ENCODE measurements at regions of chr2 and their contacts with region 1.

Region 1: DNA sequence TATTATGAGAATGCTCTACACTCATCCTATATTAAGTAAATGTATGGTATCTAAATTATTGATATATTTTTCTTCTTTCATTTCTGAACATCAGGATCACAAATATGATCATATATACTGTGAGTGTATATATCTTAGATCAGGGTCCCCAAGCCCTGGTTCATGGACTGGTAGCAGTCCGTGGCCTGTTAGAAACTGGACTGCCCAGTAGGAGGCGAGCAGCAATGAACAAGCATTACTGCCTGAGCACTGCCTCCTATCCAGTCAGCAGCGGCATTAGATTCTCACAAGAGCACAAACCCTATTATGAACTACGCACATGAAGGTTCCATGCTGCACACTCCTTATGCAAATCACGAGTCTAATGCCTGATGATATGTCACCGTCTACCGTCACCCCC is 1247.1 kb upstream of the NXPH2 start:
- DNase-seq: no peak
- H3K4me3 ChIP-seq: no peak overlapping the region
- H3K27ac ChIP-seq: no peak overlapping the region
- H3K4me1 ChIP-seq: no peaks in the 10 kb centered on the region
- H3K27me3 ChIP-seq: no peaks in the 10 kb centered on the region
- CTCF ChIP-seq: no peak

Region 2: DNA sequence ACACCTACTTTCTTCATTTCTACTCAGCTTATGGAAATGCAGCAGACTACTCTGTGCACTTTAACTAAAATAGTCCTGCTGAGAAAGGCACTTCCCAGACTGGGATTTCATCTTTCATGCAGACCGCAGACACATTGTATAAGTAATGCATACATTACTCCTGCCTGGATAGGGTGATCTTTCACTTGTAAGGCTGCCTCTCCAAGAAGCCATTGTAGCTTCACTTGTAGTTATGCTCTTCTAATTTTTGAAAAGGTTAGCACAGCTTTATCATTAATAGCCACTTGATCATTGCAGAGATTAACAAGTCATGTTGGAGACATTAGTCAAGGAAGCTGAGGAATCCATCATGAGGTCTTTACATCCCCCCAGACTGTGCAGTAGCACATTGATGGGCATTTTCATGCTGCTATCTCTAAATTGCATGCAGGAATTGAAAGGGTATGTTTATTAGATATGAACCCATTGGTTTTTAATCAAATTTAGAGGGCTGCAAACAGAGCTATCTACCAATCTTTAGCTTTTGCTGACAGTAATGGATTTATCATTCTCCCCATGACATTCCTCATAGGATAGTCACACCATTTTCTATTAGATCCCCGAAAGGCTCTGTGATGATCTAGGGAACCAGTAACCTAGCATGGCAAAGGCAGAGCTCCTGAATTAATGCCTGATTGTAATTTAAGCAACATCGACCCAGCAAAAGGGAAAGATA is 172.4 kb before region 1 on chr2:
- CTCF ChIA-PET with region 1: no interaction called
- POLR2A ChIA-PET with region 1: interaction called, 10 read pairs
- intact Hi-C with region 1: no loop called
- DNase-seq: no peak
- H3K4me3 ChIP-seq: no peak overlapping the region
- H3K27ac ChIP-seq: no peak overlapping the region
- H3K4me1 ChIP-seq: no peaks in the 10 kb centered on the region
- H3K27me3 ChIP-seq: no peaks in the 10 kb centered on the region
- CTCF ChIP-seq: no peak

Region 3: GRCh38 chr2:140178234-140178633 is 150.9 kb after region 1 on chr2:
- CTCF ChIA-PET with region 1: no interaction called
- POLR2A ChIA-PET with region 1: no interaction called
- intact Hi-C with region 1: no loop called
- DNase-seq: no peak
- H3K4me3 ChIP-seq: no peak overlapping the region
- H3K27ac ChIP-seq: no peak overlapping the region
- H3K4me1 ChIP-seq: no peaks in the 10 kb centered on the region
- H3K27me3 ChIP-seq: no peaks in the 10 kb centered on the region
- CTCF ChIP-seq: no peak